AG04449 (cell line): ENCODE measurements at regions of chr6 and their contacts with region 1.

Region 1: DNA sequence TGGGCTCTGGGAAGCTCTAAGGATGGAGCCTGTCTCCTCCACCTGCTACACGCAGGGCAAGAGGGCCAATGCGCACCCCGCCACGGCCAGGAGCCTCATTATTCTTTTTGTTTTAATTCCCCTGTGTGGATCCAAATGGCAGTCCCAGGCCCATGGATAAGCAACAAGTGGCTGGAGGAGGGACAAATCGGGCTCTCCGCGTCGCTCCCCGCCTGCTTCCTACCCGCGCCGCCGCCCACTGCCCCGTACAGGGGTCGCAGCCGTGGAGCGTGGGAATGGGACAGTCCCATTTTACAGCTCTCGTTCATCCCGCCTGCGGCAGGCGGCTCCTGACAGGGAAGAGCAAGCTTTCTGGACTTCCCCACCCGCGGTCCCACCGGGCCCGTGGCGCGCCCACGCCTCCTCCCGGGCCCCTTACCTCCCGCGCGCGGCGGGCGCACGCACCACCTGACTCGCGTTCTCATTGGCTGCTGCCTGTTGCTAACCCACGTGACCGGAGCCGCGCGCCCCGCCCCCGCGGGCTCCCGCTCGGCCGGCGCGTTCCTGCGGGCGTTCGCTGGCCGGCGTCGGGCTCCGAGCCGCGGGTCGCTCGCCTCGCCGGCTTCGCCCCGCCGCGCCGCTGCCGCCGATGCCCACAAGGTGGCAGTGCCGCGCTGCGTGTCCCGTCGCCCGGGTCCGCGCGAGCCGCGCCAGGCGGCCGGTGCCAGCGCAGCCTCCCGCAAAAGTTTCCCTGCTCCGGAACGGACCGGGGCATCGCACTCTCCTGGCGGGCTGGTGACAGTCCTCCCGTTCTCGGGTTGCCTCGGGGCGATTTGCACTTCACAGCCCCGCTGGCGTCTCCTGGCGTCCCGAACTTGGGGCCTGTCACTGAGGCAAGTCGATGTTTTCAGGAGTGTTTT is 93.3 kb downstream of the CD83 start:
- DNase-seq: no peak
- H3K4me3 ChIP-seq: peak overlapping the region; percentile 71
- CTCF ChIP-seq: peak; percentile 48

Region 2: GRCh38 chr6:14224359-14225103 is 13.6 kb after region 1 on chr6:
- CTCF ChIA-PET with region 1: interaction called, 10 read pairs
- POLR2A ChIA-PET with region 1: no interaction called
- DNase-seq: no peak
- H3K4me3 ChIP-seq: no peak overlapping the region
- CTCF ChIP-seq: no peak

Region 3: GRCh38 chr6:15389765-15390723 is 1179.1 kb after region 1 on chr6:
- CTCF ChIA-PET with region 1: interaction called, 10 read pairs
- POLR2A ChIA-PET with region 1: no interaction called
- DNase-seq: no peak
- H3K4me3 ChIP-seq: no peak overlapping the region
- CTCF ChIP-seq: peak; percentile 64